Activated CD8-positive, alpha-beta memory T cell treated with anti-CD3 and anti-CD28 coated beads, Interleukin-2, amount 10 ng/mL, durations not matched to agents 7 days and 5 days (primary cell): ENCODE measurements at regions of chr13 and their contacts with region 1.

Region 1: GRCh38 chr13:99176309-99177276 is 24.1 kb upstream of the UBAC2 start:
- DNase-seq: peak; percentile 84
- ATAC-seq: peak; percentile 88
- H3K4me3 Mint-ChIP-seq: no peak overlapping the region
- H3K27ac Mint-ChIP-seq: peak overlapping the region; percentile 53
- H3K4me1 Mint-ChIP-seq: peaks cover 31% of the 10 kb centered on the region
- H3K27me3 Mint-ChIP-seq: peaks cover 2% of the 10 kb centered on the region

Region 2: GRCh38 chr13:99200432-99201167 is 24.0 kb after region 1 on chr13 and contains the start of gene UBAC2:
- CTCF ChIA-PET with region 1: interaction called, 15 read pairs
- DNase-seq: peak; percentile 97
- ATAC-seq: peak; percentile 86
- H3K4me3 Mint-ChIP-seq: peak within 1 kb of the TSS; percentile 91
- H3K27ac Mint-ChIP-seq: peak within 1 kb of the TSS; percentile 92
- H3K4me1 Mint-ChIP-seq: peaks cover 54% of the 10 kb centered on the region
- H3K27me3 Mint-ChIP-seq: no peaks in the 10 kb centered on the region
- total RNA-seq, gene UBAC2: 52.8 to 60.8 TPM

Region 3: GRCh38 chr13:99228737-99229691 is 52.4 kb after region 1 on chr13:
- CTCF ChIA-PET with region 1: interaction called, 12 read pairs
- DNase-seq: no peak
- ATAC-seq: peak; percentile 34
- H3K4me3 Mint-ChIP-seq: peak overlapping the region; percentile 71
- H3K27ac Mint-ChIP-seq: peak overlapping the region; percentile 91
- H3K4me1 Mint-ChIP-seq: peaks cover 74% of the 10 kb centered on the region
- H3K27me3 Mint-ChIP-seq: no peaks in the 10 kb centered on the region

Region 4: GRCh38 chr13:99250982-99251825 is 74.6 kb after region 1 on chr13:
- CTCF ChIA-PET with region 1: interaction called, 24 read pairs
- DNase-seq: no peak
- ATAC-seq: peak; percentile 35
- H3K4me3 Mint-ChIP-seq: no peak overlapping the region
- H3K27ac Mint-ChIP-seq: peak overlapping the region; percentile 60
- H3K4me1 Mint-ChIP-seq: peaks cover 53% of the 10 kb centered on the region
- H3K27me3 Mint-ChIP-seq: no peaks in the 10 kb centered on the region

Region 5: GRCh38 chr13:99258210-99258860 is 81.7 kb after region 1 on chr13 and contains the start of gene GPR18:
- CTCF ChIA-PET with region 1: interaction called, 308 read pairs
- DNase-seq: peak; percentile 61
- ATAC-seq: peak; percentile 83
- H3K4me3 Mint-ChIP-seq: peak within 1 kb of the TSS; percentile 86
- H3K27ac Mint-ChIP-seq: peak within 1 kb of the TSS; percentile 94
- H3K4me1 Mint-ChIP-seq: peaks cover 57% of the 10 kb centered on the region
- H3K27me3 Mint-ChIP-seq: no peaks in the 10 kb centered on the region
- total RNA-seq, gene GPR18: 11.1 to 13.1 TPM

Region 6: DNA sequence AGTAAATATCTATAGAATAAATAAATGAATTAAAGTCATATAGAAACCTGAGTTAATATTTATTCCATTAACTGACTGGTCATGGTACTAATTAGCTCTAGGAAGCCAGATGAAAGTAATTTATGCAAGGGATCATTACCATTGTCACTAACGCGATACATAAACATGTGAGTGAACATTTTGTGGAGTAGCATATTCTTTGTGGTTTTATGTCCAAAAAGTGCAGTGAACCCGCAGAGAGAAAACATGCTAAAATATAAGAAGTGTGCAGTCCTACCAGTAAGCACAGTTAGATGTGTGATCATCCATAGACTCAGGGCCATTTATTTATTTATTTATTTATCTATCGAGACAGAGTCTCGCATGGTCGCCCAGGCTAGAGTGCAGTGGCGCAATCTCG is 129.0 kb after region 1 on chr13:
- CTCF ChIA-PET with region 1: no interaction called
- DNase-seq: no peak
- ATAC-seq: no peak
- H3K4me3 Mint-ChIP-seq: peak overlapping the region; percentile 78
- H3K27ac Mint-ChIP-seq: peak overlapping the region; percentile 79
- H3K4me1 Mint-ChIP-seq: peaks cover 80% of the 10 kb centered on the region
- H3K27me3 Mint-ChIP-seq: no peaks in the 10 kb centered on the region

Region 7: GRCh38 chr13:99380921-99381645 is 204.5 kb after region 1 on chr13:
- CTCF ChIA-PET with region 1: interaction called, 13 read pairs
- DNase-seq: peak; percentile 90
- ATAC-seq: peak; percentile 86
- H3K4me3 Mint-ChIP-seq: no peak overlapping the region
- H3K27ac Mint-ChIP-seq: peak overlapping the region; percentile 85
- H3K4me1 Mint-ChIP-seq: peaks cover 74% of the 10 kb centered on the region
- H3K27me3 Mint-ChIP-seq: no peaks in the 10 kb centered on the region

Region 8: DNA sequence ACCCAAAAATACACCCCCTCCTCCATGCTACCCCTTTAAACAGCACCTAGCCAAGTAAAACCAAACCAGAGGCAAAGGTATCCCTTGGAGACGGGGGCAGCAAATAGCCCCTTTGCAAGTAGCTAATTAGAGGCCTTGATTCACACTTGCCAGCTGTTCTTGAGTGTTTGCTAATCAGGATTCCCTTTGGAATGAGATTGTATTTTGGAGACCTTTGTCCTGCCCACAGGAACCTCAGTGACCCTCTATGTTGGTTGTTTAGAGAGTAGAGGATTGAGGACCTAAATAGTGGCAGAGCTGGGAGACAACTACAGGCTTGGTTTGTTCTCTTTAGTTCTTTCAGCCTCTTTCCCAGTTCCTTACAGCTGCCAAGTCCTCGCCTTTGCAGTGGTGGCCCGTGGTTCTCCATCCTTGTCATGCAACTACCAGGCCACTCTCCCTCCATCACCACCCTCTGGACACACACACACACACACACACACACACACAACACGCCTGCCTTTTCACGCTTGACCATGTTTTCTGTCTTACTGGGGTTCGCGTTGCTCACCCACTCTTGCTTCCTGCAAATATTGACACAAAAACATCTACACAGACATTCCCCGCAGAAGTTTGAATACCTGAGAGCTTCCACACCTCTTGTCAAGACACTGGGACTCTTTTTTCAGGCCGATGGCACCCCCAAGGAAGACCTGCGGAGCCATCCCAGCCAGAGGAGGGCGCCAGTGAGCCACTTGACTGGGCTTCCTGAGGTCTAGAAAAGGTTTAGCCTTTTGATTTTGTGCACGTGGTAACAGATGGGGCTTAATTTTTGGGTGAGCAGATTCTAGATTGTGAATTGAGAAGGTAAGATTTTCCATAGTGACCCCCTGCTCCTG is 210.6 kb after region 1 on chr13:
- CTCF ChIA-PET with region 1: interaction called, 13 read pairs
- DNase-seq: peak; percentile 87
- ATAC-seq: peak; percentile 65
- H3K4me3 Mint-ChIP-seq: no peak overlapping the region
- H3K27ac Mint-ChIP-seq: peak overlapping the region; percentile 25
- H3K4me1 Mint-ChIP-seq: peaks cover 37% of the 10 kb centered on the region
- H3K27me3 Mint-ChIP-seq: no peaks in the 10 kb centered on the region